CD14-positive monocyte (primary cell): ENCODE measurements at regions of chr17 and their contacts with region 1.

Region 1: GRCh38 chr17:63178530-63178929 is 212.5 kb downstream of the TANC2 start:
- DNase-seq: no peak
- H3K4me3 ChIP-seq: no peak overlapping the region
- H3K4me3 Mint-ChIP-seq: no peak overlapping the region
- H3K27ac ChIP-seq: no peak overlapping the region
- H3K27ac Mint-ChIP-seq: no peak overlapping the region
- H3K4me1 ChIP-seq: no peaks in the 10 kb centered on the region
- H3K4me1 Mint-ChIP-seq: no peaks in the 10 kb centered on the region
- H3K27me3 ChIP-seq: no peaks in the 10 kb centered on the region
- H3K27me3 Mint-ChIP-seq: peaks cover 0 to 3% (median 0%) of the 10 kb centered on the region in 3 donors
- CTCF ChIP-seq: no peak

Region 2: GRCh38 chr17:63224644-63225043 is 46.1 kb after region 1 on chr17:
- intact Hi-C with region 1: loop called in 1 of 2 experiments (anchors 5 kb)
- DNase-seq: no peak
- H3K4me3 ChIP-seq: no peak overlapping the region
- H3K4me3 Mint-ChIP-seq: no peak overlapping the region
- H3K27ac ChIP-seq: no peak overlapping the region
- H3K27ac Mint-ChIP-seq: no peak overlapping the region
- H3K4me1 ChIP-seq: peaks cover 0 to 8% of the 10 kb centered on the region in 2 donors
- H3K4me1 Mint-ChIP-seq: peaks cover 8% of the 10 kb centered on the region
- H3K27me3 ChIP-seq: no peaks in the 10 kb centered on the region
- H3K27me3 Mint-ChIP-seq: peaks cover 0 to 1% (median 0%) of the 10 kb centered on the region in 3 donors
- CTCF ChIP-seq: no peak